Sciatic nerve (tissue), 2 donors: ENCODE measurements at regions of chr12 and their contacts with region 1.

Region 1: DNA sequence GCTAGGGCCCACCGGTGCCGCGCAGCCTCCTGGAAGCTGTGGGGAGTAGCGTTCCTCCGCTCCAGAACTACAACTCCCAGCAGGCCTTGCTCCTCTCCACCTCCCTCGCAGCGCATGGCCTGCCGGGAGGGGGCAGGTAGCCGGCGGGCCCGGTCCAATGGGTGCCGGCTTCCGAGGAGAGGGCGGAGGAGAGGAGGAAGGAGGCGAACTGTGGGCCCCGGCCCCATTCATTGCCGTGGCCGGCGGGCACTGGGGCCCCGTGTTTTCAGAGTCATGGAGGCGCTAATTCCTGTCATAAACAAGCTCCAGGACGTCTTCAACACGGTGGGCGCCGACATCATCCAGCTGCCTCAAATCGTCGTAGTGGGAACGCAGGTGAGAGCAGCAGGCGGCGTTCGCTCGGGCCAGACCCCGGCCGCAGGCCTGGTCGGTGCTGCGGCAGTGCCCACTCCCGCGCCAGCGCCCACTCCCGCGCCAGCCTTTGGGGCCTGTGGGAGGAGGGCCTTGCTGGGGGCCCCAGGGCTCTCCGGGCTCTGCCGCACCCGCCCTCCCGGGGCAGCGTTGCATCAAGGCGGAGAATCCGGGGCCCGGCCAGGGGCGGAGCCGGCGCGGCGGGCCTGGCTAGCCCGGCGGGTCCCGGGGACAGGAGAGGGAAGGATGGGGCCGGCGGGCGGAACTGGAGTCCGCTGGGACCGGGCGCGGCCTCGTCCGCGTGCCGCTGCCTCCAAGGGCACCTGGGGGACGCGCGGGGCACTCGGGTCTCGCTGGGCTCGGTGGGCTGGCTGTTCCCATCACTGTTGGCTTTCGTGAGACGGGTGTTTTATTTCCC is at the start of gene DNM1L:
- DNase-seq: peak; percentile 95
- ATAC-seq: peak; percentile 99
- total RNA-seq, gene DNM1L: 64.2 TPM

Region 2: DNA sequence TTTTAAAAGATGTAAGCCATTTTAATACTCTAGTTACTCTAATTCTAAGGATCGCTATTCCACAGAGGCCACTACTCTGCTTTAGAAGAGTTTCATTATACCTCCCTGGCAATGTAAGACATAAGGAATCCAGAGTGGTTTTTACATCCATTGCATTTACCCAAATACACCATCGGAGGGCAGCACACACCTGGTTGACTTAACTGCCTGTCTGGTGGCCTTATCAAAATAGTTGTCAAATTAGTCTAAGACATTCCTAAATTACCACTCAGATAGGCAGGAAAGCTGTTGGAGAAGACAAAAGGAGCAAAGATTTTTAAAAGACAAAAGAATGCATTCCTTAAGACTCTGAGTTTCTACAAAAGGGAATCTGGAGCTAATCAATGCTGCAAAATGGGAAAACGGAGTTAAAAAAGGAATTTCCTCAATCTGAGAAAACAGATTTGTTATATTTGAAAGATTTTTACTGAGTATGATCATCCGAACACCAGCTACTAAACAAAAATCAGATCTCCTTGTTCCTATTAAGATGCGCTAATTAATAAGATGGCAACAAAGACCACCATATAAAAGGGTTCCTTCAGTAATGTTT is 313.7 kb before region 1 on chr12:
- intact Hi-C with region 1: loop called (anchors 10 kb)
- DNase-seq: no peak
- ATAC-seq: peak; percentile 69